Ascending aorta (tissue), 2 donors: ENCODE measurements at regions of chr3 and their contacts with region 1.

Region 1: GRCh38 chr3:35965908-35966307 is 326.6 kb downstream of the ARPP21 start:
- DNase-seq: no peak
- H3K4me3 ChIP-seq: no peak overlapping the region
- H3K27ac ChIP-seq: no peak overlapping the region
- H3K4me1 ChIP-seq: peaks cover 0 to 13% of the 10 kb centered on the region in 2 donors
- H3K27me3 ChIP-seq: no peaks in the 10 kb centered on the region
- CTCF ChIP-seq: peak; percentile 39 to 77 (median 59)

Region 2: DNA sequence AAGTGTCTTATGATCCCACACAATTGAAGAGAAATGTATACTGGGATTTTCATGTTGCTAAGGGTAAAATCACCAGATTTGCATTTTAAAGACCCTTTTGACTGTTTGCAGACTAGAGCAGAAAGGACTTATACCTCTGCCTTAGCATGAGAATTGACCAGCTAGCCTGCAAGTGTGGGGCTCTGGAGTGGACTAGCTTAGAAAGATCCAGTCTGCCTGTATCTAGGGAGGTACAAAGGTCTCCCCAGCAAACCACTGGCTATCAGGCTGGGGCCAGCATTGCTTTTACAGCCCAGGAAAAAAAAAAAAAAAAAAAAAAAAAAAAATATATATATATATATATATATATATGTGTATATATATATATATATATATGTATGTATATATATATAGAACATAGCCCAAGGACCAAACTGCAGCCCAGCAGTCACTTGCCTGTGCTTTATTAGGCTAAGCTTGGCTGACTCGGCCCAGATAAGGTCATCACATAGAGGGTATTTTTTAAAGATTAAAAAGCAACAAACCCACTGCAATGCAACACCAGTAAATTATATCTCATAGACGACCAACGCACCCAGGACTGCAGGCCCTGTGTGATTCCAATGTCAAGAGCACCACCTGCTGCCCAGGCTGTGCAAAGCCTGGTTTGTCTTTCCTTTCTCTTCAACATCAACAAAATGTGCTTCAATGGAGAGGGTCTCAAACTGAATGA is 734.8 kb after region 1 on chr3:
- intact Hi-C with region 1: loop called (anchors 1 kb)
- DNase-seq: peak in 1 of 2 donors; percentile 69
- H3K4me3 ChIP-seq: no peak overlapping the region
- H3K27ac ChIP-seq: no peak overlapping the region
- H3K4me1 ChIP-seq: no peaks in the 10 kb centered on the region
- H3K27me3 ChIP-seq: no peaks in the 10 kb centered on the region
- CTCF ChIP-seq: peak; percentile 58 to 89 (median 72)

Region 3: DNA sequence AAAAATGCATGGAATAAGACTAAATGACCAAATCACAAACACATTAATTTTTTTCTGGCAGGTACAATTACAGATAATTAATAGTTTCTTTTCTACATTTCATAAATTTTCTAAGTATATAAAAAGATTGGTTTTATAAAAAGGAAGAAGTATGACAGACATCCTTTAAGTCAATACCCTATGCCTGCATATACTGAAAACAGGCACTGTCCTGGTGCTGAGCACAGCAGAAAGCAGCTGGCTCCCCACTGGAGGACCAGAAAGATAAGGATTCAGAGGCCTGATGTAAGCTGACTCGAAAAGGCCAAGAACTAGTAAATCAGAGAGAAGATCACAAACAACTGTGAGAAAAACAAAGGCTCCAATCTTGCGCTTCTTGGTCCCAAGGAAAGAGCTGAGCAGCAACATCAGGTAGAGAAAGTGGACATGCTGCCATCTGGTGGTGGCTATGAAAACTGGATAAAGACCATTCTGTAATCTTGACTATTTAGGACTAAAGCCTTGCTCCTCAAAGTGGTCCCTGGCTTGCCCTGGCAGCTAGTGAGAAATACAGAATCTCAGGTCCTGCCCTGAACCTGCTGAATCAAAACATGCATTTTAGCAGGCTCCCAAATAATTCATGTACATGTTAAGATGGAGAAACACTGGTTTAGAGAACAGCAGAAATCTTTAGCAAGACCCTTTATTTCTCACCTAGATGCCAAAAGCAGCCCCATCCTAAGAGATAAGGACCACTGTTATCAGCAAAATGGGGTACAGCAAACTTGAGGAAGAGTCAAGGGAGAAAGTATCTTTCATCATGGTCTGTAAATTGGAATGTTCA is 902.9 kb after region 1 on chr3:
- intact Hi-C with region 1: loop called (anchors 1 kb)
- DNase-seq: no peak
- H3K4me3 ChIP-seq: no peak overlapping the region
- H3K27ac ChIP-seq: no peak overlapping the region
- H3K4me1 ChIP-seq: no peaks in the 10 kb centered on the region
- H3K27me3 ChIP-seq: no peaks in the 10 kb centered on the region
- CTCF ChIP-seq: peak; percentile 50 to 82 (median 66)